T-cell (primary cell): ENCODE measurements at regions of chr3 and their contacts with region 1.

Region 1: DNA sequence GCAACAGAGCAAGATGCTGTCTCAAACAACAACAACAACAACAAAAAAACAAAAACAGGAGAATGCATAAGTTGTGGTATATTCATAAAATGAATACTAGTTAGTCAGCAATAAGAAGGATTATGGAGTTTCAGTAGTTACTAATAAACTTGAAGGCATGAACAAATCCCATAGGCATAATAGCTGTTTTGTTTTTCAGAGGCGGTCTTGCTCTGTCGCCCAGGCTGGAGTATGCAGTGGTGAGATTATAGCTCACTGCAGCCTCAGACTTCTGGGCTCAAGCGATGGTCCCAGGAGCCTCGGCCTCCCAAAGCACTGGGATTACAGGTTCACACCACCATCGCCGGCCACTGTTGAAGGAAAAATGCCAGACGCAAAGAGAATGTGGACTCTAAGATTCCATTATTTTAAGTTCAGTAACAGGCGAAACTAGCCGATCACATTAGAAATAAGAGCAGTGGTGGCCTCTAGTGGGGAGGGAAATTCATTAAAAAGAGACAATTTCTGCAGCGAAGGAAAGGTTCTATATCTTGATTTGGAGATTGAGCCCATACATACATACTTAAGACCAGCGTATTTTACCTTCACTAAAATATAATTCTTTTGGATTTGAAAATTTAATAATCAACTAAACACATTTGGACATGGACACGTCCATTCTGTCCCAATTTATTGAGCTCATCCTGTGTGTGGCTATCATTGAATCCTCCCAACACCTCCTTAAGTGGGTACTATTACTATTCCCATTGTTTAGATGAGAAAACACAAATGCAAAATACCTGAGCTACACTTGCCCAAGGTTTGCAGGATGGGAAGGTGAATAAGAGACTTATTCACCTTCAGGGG is 27.4 kb upstream of the HDAC11 start:
- DNase-seq: peak in 30 of 35 experiments; percentile 8 to 74 (median 42)
- ATAC-seq: peak; percentile 26 to 37 (median 30)
- H3K4me3 ChIP-seq: peak overlapping the region; percentile 15
- H3K4me3 Mint-ChIP-seq: peak overlapping the region; percentile 87 to 97 (median 95)
- H3K27ac ChIP-seq: peak overlapping the region; percentile 30
- H3K27ac Mint-ChIP-seq: peak overlapping the region; percentile 96 to 97
- H3K4me1 ChIP-seq: peaks cover 9 to 23% of the 10 kb centered on the region in 2 experiments
- H3K4me1 Mint-ChIP-seq: peaks cover 12 to 27% (median 21%) of the 10 kb centered on the region in 3 donors
- H3K27me3 ChIP-seq: peaks cover 0 to 6% of the 10 kb centered on the region in 2 experiments
- H3K27me3 Mint-ChIP-seq: no peaks in the 10 kb centered on the region

Region 2: GRCh38 chr3:13229273-13229949 is 223.3 kb before region 1 on chr3:
- CTCF ChIA-PET with region 1: interaction called in 1 of 2 experiments, 10 read pairs
- POLR2A ChIA-PET with region 1: no interaction called
- DNase-seq: no peak
- ATAC-seq: peak in 1 of 4 experiments; percentile 45
- H3K4me3 ChIP-seq: no peak overlapping the region
- H3K4me3 Mint-ChIP-seq: no peak overlapping the region
- H3K27ac ChIP-seq: no peak overlapping the region
- H3K27ac Mint-ChIP-seq: no peak overlapping the region
- H3K4me1 ChIP-seq: peaks cover under 1 to 15% of the 10 kb centered on the region in 2 experiments
- H3K4me1 Mint-ChIP-seq: peaks cover 10 to 14% (median 11%) of the 10 kb centered on the region in 3 donors
- H3K27me3 ChIP-seq: peaks cover 0 to 22% of the 10 kb centered on the region in 2 experiments
- H3K27me3 Mint-ChIP-seq: peaks cover 3 to 6% of the 10 kb centered on the region in 2 donors

Region 3: GRCh38 chr3:13391308-13391707 is 61.4 kb before region 1 on chr3:
- CTCF ChIA-PET with region 1: interaction called, 21 to 33 read pairs
- POLR2A ChIA-PET with region 1: no interaction called
- DNase-seq: peak in 21 of 35 experiments; percentile 7 to 59 (median 24)
- ATAC-seq: peak in 2 of 4 experiments; percentile 34 to 48
- H3K4me3 ChIP-seq: no peak overlapping the region
- H3K4me3 Mint-ChIP-seq: no peak overlapping the region
- H3K27ac ChIP-seq: no peak overlapping the region
- H3K27ac Mint-ChIP-seq: peak overlapping the region in 1 of 2 donors; percentile 69
- H3K4me1 ChIP-seq: peaks cover 0 to 26% of the 10 kb centered on the region in 2 experiments
- H3K4me1 Mint-ChIP-seq: peaks cover 27 to 38% (median 30%) of the 10 kb centered on the region in 3 donors
- H3K27me3 ChIP-seq: no peaks in the 10 kb centered on the region
- H3K27me3 Mint-ChIP-seq: no peaks in the 10 kb centered on the region

Region 4: DNA sequence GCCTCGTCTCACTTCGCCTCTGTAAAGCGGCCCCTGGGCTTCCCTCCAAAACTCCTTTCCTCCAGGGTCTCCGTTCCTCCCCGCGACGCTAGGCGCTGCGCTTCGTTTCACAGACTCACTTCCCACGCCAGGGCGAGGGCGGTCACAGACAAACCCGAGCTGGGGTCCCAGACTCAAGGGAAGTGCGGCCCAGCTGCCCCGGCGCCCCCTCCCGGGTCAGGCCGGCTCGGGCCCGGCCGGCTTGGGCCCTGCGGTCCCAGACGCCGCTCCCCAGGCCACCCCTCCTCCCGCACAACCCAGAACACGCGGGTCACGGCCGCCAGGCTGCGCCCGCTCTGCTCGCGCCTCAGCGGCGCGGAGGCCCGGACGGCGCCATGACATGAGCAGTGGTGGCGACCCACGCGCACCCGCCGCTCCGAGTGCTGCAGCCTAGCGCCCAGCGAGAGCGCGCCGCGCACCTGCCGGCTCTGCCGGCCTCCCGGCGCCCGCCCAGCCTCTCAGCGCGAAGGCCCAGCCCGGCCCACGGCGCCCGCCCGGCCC is 33.1 kb before region 1 on chr3:
- CTCF ChIA-PET with region 1: interaction called, 7 to 56 read pairs
- POLR2A ChIA-PET with region 1: interaction called, 5 to 6 read pairs
- DNase-seq: peak in 34 of 35 experiments; percentile 36 to 79 (median 56)
- ATAC-seq: peak; percentile 43 to 77 (median 72)
- H3K4me3 ChIP-seq: peak overlapping the region; percentile 67 to 80
- H3K4me3 Mint-ChIP-seq: peak overlapping the region; percentile 82 to 88 (median 87)
- H3K27ac ChIP-seq: peak overlapping the region; percentile 85
- H3K27ac Mint-ChIP-seq: peak overlapping the region; percentile 94 to 99
- H3K4me1 ChIP-seq: peaks cover 47 to 64% of the 10 kb centered on the region in 2 experiments
- H3K4me1 Mint-ChIP-seq: peaks cover 72 to 73% (median 73%) of the 10 kb centered on the region in 3 donors
- H3K27me3 ChIP-seq: no peaks in the 10 kb centered on the region
- H3K27me3 Mint-ChIP-seq: no peaks in the 10 kb centered on the region

Region 5: GRCh38 chr3:13548696-13549622 is 96.2 kb after region 1 on chr3 and contains the start of gene FBLN2:
- CTCF ChIA-PET with region 1: no interaction called
- POLR2A ChIA-PET with region 1: no interaction called
- DNase-seq: peak in 3 of 35 experiments; percentile 3 to 46 (median 19)
- ATAC-seq: peak; percentile 39 to 59 (median 44)
- H3K4me3 ChIP-seq: peak within 1 kb of the TSS in 1 of 2 donors; percentile 4
- H3K4me3 Mint-ChIP-seq: peak within 1 kb of the TSS; percentile 75 to 85 (median 75)
- H3K27ac ChIP-seq: no peak within 1 kb of the TSS
- H3K27ac Mint-ChIP-seq: peak within 1 kb of the TSS; percentile 23 to 60
- H3K4me1 ChIP-seq: peaks cover 14 to 54% of the 10 kb centered on the region in 2 experiments
- H3K4me1 Mint-ChIP-seq: peaks cover 28 to 48% (median 29%) of the 10 kb centered on the region in 3 donors
- H3K27me3 ChIP-seq: peaks cover 0 to 77% of the 10 kb centered on the region in 2 experiments
- H3K27me3 Mint-ChIP-seq: peaks cover 20 to 71% of the 10 kb centered on the region in 2 donors
- total RNA-seq, gene FBLN2: 1.5 to 5.8 (median 2.8) TPM

Region 6: GRCh38 chr3:14744556-14744955 is 1291.8 kb after region 1 on chr3:
- CTCF ChIA-PET with region 1: no interaction called
- POLR2A ChIA-PET with region 1: no interaction called
- DNase-seq: no peak
- ATAC-seq: no peak
- H3K4me3 ChIP-seq: no peak overlapping the region
- H3K4me3 Mint-ChIP-seq: no peak overlapping the region
- H3K27ac ChIP-seq: no peak overlapping the region
- H3K27ac Mint-ChIP-seq: no peak overlapping the region
- H3K4me1 ChIP-seq: no peaks in the 10 kb centered on the region
- H3K4me1 Mint-ChIP-seq: no peaks in the 10 kb centered on the region
- H3K27me3 ChIP-seq: peaks cover 0 to 8% of the 10 kb centered on the region in 2 experiments
- H3K27me3 Mint-ChIP-seq: peaks cover 25 to 27% of the 10 kb centered on the region in 2 donors